ENCODE measurements at regions of chr20 and their contacts with region 1.

Region 1: DNA sequence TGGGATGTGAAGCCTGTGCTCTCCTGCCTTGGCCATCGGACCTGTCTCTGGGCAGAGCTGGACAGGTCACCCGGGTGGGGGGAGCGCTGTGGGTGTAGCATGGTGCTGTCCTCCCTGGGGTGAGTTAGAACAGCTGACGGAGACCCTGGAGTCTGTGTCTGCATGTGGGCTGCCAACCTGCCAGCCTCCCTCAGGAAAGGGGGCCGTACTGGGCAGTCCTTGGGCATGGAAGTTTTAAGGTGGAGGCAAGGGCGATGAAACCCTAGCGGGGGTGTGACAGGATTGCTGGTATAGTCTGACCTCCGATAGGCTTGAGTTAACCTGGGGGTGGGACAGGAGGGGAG is 2.4 kb downstream of the SOX18 start:
- DNase-seq: no peak
- ATAC-seq: no peak
- H3K4me3 ChIP-seq: no peak overlapping the region
- H3K4me3 Mint-ChIP-seq: peak overlapping the region in 1 of 3 donors; percentile 55
- H3K27ac ChIP-seq: no peak overlapping the region
- H3K27ac Mint-ChIP-seq: peak overlapping the region in 1 of 2 donors; percentile 5
- H3K4me1 ChIP-seq: peaks cover 10 to 28% of the 10 kb centered on the region in 2 experiments
- H3K4me1 Mint-ChIP-seq: peaks cover 19 to 40% (median 39%) of the 10 kb centered on the region in 3 donors
- H3K27me3 ChIP-seq: peaks cover 0 to 60% of the 10 kb centered on the region in 2 experiments
- H3K27me3 Mint-ChIP-seq: peaks cover 6 to 37% of the 10 kb centered on the region in 2 donors

Region 2: GRCh38 chr20:63969838-63970713 is 76.9 kb before region 1 on chr20 and contains the start of gene ZNF512B:
- CTCF ChIA-PET with region 1: no interaction called
- POLR2A ChIA-PET with region 1: no interaction called
- DNase-seq: peak in 24 of 35 experiments; percentile 34 to 73 (median 53)
- ATAC-seq: peak; percentile 57 to 69 (median 60)
- H3K4me3 ChIP-seq: peak within 1 kb of the TSS; percentile 55 to 84
- H3K4me3 Mint-ChIP-seq: peak within 1 kb of the TSS; percentile 76 to 89 (median 83)
- H3K27ac ChIP-seq: peak within 1 kb of the TSS; percentile 57
- H3K27ac Mint-ChIP-seq: peak within 1 kb of the TSS; percentile 85 to 87
- H3K4me1 ChIP-seq: peaks cover 5 to 31% of the 10 kb centered on the region in 2 experiments
- H3K4me1 Mint-ChIP-seq: peaks cover 20 to 32% (median 32%) of the 10 kb centered on the region in 3 donors
- H3K27me3 ChIP-seq: peaks cover 0 to 4% of the 10 kb centered on the region in 2 experiments
- H3K27me3 Mint-ChIP-seq: no peaks in the 10 kb centered on the region
- total RNA-seq, gene ZNF512B: 22.7 to 26.3 (median 25.1) TPM

Region 3: GRCh38 chr20:63980806-63981728 is 66.0 kb before region 1 on chr20 and contains the start of gene PRPF6:
- CTCF ChIA-PET with region 1: no interaction called
- POLR2A ChIA-PET with region 1: no interaction called
- DNase-seq: peak; percentile 86 to 98 (median 93)
- ATAC-seq: peak; percentile 69 to 76 (median 70)
- H3K4me3 ChIP-seq: peak within 1 kb of the TSS; percentile 62 to 72
- H3K4me3 Mint-ChIP-seq: peak within 1 kb of the TSS; percentile 84 to 94 (median 85)
- H3K27ac ChIP-seq: peak within 1 kb of the TSS; percentile 80
- H3K27ac Mint-ChIP-seq: peak within 1 kb of the TSS; percentile 96 to 98
- H3K4me1 ChIP-seq: peaks cover 37 to 58% of the 10 kb centered on the region in 2 experiments
- H3K4me1 Mint-ChIP-seq: peaks cover 64 to 66% (median 64%) of the 10 kb centered on the region in 3 donors
- H3K27me3 ChIP-seq: no peaks in the 10 kb centered on the region
- H3K27me3 Mint-ChIP-seq: no peaks in the 10 kb centered on the region
- total RNA-seq, gene PRPF6: 59.8 to 106 (median 83.5) TPM

Region 4: DNA sequence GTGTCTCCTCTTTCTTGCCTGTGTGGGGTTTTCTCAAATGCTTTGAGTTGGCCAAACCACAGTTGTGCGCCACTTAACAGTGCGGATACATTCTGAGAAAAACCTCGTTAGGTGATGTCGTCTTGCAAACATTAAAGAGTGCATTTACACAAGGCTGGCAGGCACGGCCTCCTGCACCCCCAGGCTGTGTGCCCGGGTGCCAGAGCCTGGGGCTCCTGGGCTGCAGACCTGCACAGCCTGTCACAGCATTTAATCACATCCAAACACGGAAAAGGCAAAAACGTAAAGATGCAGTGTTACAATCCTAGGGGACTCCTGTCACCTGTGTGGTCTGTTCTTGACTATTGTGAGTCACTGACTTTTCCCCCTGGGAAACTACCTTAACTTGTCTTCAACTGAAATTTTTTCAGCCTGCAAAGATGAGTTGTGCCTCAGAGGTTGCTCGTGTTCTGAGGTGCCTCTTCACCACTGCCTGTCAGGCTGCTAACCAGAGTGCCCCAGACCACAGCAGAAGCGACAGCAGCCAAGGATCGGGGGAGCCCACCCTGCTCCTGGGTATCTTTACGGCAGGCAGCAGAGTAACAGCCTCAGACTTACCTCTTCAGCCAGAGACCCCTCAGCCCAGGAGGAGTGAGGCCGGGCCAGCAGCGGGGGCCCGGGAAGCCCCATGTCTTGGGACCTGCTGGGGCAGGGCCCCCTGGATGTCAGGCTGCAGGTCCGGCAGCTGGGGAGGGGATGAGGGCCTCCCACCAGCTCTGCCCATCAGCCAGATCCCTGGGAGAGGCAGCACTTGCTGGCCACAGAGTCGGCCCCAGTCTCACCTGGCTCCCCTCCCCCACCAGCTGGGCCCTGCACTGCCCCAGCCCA is 11.7 kb before region 1 on chr20:
- CTCF ChIA-PET with region 1: no interaction called
- POLR2A ChIA-PET with region 1: no interaction called
- DNase-seq: peak in 10 of 35 experiments; percentile 15 to 63 (median 28)
- ATAC-seq: peak; percentile 3 to 58 (median 20)
- H3K4me3 ChIP-seq: no peak overlapping the region
- H3K4me3 Mint-ChIP-seq: peak overlapping the region; percentile 57 to 76 (median 66)
- H3K27ac ChIP-seq: peak overlapping the region; percentile 74
- H3K27ac Mint-ChIP-seq: peak overlapping the region; percentile 89 to 98
- H3K4me1 ChIP-seq: peaks cover 8 to 65% of the 10 kb centered on the region in 2 experiments
- H3K4me1 Mint-ChIP-seq: peaks cover 45 to 58% (median 48%) of the 10 kb centered on the region in 3 donors
- H3K27me3 ChIP-seq: peaks cover 0 to 12% of the 10 kb centered on the region in 2 experiments
- H3K27me3 Mint-ChIP-seq: no peaks in the 10 kb centered on the region

Region 5: GRCh38 chr20:64074963-64075362 is 27.9 kb after region 1 on chr20:
- CTCF ChIA-PET with region 1: interaction called in 1 of 2 experiments, 10 read pairs
- POLR2A ChIA-PET with region 1: no interaction called
- DNase-seq: no peak
- ATAC-seq: no peak
- H3K4me3 ChIP-seq: no peak overlapping the region
- H3K4me3 Mint-ChIP-seq: no peak overlapping the region
- H3K27ac ChIP-seq: no peak overlapping the region
- H3K27ac Mint-ChIP-seq: peak overlapping the region in 1 of 2 donors; percentile 22
- H3K4me1 ChIP-seq: peaks cover 8 to 50% of the 10 kb centered on the region in 2 experiments
- H3K4me1 Mint-ChIP-seq: peaks cover 13 to 29% (median 22%) of the 10 kb centered on the region in 3 donors
- H3K27me3 ChIP-seq: no peaks in the 10 kb centered on the region
- H3K27me3 Mint-ChIP-seq: no peaks in the 10 kb centered on the region